Activated CD8-positive, alpha-beta T cell treated with anti-CD3 and anti-CD28 coated beads, Interleukin-2, amount 10 ng/mL, durations not matched to agents 7 days and 5 days (primary cell): ENCODE measurements at regions of chr15 and their contacts with region 1.

Region 1: GRCh38 chr15:63048115-63048775 is 5.7 kb downstream of the TPM1 start:
- DNase-seq: peak; percentile 85
- ATAC-seq: peak; percentile 89
- H3K4me3 Mint-ChIP-seq: peak overlapping the region; percentile 83
- H3K27ac Mint-ChIP-seq: peak overlapping the region; percentile 48
- H3K4me1 Mint-ChIP-seq: peaks cover 30% of the 10 kb centered on the region
- H3K27me3 Mint-ChIP-seq: peaks cover 50% of the 10 kb centered on the region

Region 2: GRCh38 chr15:63019539-63020109 is 28.6 kb before region 1 on chr15:
- CTCF ChIA-PET with region 1: interaction called, 11 read pairs
- POLR2A ChIA-PET with region 1: no interaction called
- DNase-seq: no peak
- ATAC-seq: no peak
- H3K4me3 Mint-ChIP-seq: no peak overlapping the region
- H3K27ac Mint-ChIP-seq: no peak overlapping the region
- H3K4me1 Mint-ChIP-seq: peaks cover 7% of the 10 kb centered on the region
- H3K27me3 Mint-ChIP-seq: peaks cover 8% of the 10 kb centered on the region

Region 3: DNA sequence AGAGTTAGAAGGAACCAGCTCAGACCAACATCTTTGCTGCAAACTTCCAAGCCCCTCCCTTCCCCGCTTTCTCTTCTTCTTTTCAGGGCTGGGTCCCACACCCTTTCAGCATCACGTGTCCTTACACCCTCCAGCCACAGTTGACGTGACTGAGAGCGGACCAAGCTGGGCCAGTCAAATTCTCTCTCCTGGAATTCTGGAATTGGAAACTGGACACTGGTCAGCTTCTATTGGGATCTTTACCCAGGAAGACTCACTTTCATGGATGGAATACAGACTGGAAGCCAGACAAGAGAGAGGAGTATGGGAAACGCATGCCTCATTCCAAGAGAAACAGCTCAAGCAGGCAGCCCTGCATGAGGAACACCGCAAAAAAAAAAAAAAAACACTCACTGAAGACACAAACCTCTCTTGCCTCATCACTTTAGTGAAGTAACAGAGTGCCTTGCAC is 18.1 kb before region 1 on chr15:
- CTCF ChIA-PET with region 1: interaction called, 47 read pairs
- POLR2A ChIA-PET with region 1: no interaction called
- DNase-seq: no peak
- ATAC-seq: no peak
- H3K4me3 Mint-ChIP-seq: no peak overlapping the region
- H3K27ac Mint-ChIP-seq: no peak overlapping the region
- H3K4me1 Mint-ChIP-seq: no peaks in the 10 kb centered on the region
- H3K27me3 Mint-ChIP-seq: peaks cover 22% of the 10 kb centered on the region

Region 4: DNA sequence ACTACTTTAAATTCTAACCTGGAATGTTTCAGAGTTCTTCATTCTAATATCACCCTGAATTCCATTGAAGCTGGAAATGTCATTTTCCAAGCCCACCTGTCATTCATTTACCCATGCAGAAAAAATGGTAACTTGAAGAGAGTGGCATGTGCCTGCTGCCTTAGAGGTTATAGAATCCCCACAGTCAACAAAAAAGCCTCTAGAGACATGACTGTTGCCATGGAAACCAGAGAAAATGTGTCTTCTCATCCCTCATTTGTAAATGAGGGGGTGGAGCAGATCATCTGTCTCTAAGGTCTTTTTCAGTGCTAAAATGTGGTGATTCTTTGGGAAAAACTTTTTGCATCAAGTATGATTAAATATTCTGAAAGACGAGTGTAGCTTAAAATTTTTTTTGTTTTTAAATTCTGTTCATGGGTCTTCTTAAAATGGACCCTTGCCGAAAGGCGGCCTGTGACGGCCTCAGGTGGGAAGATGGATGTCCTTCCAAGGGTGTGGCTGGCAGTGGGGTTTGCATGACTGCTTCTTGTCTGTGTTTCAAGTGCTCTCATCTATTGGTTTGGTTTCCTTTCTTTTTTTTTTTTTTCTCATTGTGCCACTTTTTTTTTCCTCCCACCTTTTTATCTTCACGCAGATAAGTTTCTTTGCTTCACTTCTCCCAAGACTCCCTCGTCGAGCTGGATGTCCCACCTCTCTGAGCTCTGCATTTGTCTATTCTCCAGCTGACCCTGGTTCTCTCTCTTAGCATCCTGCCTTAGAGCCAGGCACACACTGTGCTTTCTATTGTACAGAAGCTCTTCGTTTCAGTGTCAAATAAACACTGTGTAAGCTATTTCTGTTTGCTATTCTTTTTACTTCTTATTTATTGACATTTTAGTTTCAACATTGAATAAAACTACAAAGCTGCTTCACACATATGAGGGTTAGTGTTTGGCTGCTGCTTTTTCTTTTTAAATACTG is 17.3 kb after region 1 on chr15:
- CTCF ChIA-PET with region 1: interaction called, 65 read pairs
- POLR2A ChIA-PET with region 1: no interaction called
- DNase-seq: no peak
- ATAC-seq: no peak
- H3K4me3 Mint-ChIP-seq: no peak overlapping the region
- H3K27ac Mint-ChIP-seq: no peak overlapping the region
- H3K4me1 Mint-ChIP-seq: no peaks in the 10 kb centered on the region
- H3K27me3 Mint-ChIP-seq: no peaks in the 10 kb centered on the region

Region 5: DNA sequence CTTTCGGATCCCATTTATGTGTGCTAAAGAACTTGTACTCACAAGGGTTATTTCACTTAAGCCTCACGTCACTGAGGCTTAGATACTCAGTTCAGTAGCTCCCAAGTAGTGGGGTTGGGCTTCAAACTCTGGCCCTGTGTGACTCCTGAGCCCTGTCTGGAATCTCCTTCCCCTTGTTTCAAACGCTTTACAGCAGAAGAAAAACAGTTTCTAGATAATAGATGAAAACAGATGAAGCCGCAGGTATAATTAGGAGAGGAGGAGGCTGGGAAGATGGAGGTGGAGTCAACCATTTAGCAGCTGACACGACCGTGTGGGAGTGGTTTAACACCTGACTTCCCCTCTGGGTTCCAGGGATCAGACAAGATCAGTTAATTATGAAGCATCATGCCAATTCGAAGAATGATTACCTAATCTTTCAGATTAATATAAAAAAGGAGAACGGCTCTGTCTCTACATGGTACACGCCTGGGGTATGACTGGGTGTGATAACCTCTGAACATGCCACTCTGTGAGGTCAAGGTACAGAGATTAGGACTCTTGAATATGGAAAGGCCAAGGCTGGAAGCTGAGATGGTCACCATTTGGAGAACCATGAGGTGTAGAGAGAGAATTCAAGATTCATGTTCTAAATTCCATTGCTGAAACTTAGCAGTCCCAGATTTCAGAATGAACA is 25.4 kb after region 1 on chr15:
- CTCF ChIA-PET with region 1: interaction called, 17 read pairs
- POLR2A ChIA-PET with region 1: no interaction called
- DNase-seq: no peak
- ATAC-seq: no peak
- H3K4me3 Mint-ChIP-seq: no peak overlapping the region
- H3K27ac Mint-ChIP-seq: no peak overlapping the region
- H3K4me1 Mint-ChIP-seq: peaks cover 12% of the 10 kb centered on the region
- H3K27me3 Mint-ChIP-seq: peaks cover 10% of the 10 kb centered on the region

Region 6: DNA sequence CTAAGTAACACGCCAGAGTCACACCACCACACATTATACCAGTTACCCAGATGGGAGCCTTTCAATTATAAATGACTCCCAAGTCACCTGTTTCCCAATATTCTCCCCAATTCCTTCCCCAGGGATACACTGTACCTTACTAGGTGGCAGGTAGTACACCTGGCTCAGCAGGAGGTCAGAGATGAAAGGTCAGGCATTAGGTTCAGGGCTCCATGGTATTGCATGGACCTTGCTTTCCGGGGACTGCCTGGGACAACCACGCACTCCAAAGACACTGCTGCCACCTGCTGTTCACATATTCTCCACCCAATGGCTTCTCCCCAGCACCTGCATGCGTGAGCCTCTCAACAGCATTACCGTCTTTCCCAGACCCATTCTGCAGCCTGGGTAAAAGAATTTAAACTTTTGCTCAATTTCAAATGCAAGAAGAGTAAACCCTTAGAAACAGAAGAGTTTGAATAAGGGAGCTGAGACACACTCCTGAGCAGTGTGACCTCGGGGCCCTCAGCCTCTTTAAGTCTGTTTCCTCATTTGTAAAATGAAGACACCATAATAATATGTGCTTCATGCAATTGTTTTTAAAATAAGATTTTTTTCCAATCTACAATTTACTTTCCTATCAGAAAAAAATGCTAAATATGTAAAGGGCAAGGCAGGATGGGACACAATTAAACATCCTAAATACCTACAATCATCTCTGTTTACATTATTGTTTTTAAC is 45.4 kb after region 1 on chr15:
- CTCF ChIA-PET with region 1: interaction called, 90 read pairs
- POLR2A ChIA-PET with region 1: no interaction called
- DNase-seq: peak; percentile 84
- ATAC-seq: peak; percentile 94
- H3K4me3 Mint-ChIP-seq: no peak overlapping the region
- H3K27ac Mint-ChIP-seq: no peak overlapping the region
- H3K4me1 Mint-ChIP-seq: peaks cover 20% of the 10 kb centered on the region
- H3K27me3 Mint-ChIP-seq: peaks cover 1% of the 10 kb centered on the region